ENCODE measurements at regions of chr10 and their contacts with region 1.

Region 1: GRCh38 chr10:99869581-99870122 is 87.2 kb downstream of the ABCC2 start:
- DNase-seq: no peak
- ATAC-seq: no peak
- H3K4me3 ChIP-seq: no peak overlapping the region
- H3K27ac ChIP-seq: no peak overlapping the region
- H3K4me1 ChIP-seq: peaks cover 6% of the 10 kb centered on the region
- H3K27me3 ChIP-seq: no peaks in the 10 kb centered on the region
- CTCF ChIP-seq: no peak

Region 2: GRCh38 chr10:99799613-99800012 is 70.0 kb before region 1 on chr10:
- intact Hi-C with region 1: no loop called
- DNase-seq: no peak
- ATAC-seq: no peak
- H3K4me3 ChIP-seq: no peak overlapping the region
- H3K27ac ChIP-seq: no peak overlapping the region
- H3K4me1 ChIP-seq: no peaks in the 10 kb centered on the region
- H3K27me3 ChIP-seq: no peaks in the 10 kb centered on the region
- CTCF ChIP-seq: no peak

Region 3: DNA sequence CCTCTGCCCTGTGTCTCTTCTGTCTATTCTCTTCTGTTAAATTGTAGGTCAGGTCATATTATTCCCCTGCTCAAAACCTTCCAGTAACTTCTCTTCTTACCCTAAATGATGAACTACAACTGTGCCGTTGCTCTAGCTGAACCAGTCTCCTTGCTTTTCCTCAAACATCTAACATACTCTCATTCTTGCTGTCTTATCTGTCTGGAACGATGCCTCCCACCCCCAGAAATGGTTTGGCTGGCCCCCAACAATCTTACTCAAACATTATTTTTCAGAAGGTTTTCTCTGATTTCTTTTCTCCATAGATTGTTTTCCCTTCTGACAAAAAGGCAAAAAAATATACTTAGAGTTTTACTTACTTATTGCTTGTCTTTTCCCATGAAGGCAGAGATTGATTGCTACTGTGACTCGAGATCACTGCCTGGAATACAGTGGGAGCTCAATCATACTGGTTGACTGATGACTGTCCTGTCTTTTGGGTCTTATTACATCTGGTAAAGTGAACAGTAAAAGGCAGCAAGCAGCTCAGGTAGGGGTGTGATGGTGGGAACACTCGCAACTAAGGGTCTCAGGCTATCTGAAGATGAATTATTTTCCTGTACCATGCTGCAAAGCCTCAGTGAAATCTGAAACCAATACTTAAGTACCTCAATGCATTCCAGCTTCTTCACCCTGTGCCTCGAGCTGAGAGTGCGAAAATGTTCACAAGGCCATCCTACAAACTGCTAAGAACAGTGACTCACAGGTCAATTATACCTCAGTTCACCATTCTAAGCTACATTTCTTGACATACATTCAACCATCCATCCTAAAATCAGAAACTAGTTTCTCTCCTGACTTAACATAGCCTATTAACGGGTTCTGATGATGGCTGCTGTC is 72.5 kb after region 1 on chr10:
- intact Hi-C with region 1: loop called in 1 of 2 experiments (anchors 2 kb)
- DNase-seq: no peak
- ATAC-seq: peak; percentile 47 to 80 (median 66)
- H3K4me3 ChIP-seq: no peak overlapping the region
- H3K27ac ChIP-seq: no peak overlapping the region
- H3K4me1 ChIP-seq: peaks cover 25% of the 10 kb centered on the region
- H3K27me3 ChIP-seq: no peaks in the 10 kb centered on the region
- CTCF ChIP-seq: no peak

Measured in psoas muscle (tissue), 8 donors.